SK-N-SH (cell line): ENCODE measurements at regions of chr17 and their contacts with region 1.

Region 1: DNA sequence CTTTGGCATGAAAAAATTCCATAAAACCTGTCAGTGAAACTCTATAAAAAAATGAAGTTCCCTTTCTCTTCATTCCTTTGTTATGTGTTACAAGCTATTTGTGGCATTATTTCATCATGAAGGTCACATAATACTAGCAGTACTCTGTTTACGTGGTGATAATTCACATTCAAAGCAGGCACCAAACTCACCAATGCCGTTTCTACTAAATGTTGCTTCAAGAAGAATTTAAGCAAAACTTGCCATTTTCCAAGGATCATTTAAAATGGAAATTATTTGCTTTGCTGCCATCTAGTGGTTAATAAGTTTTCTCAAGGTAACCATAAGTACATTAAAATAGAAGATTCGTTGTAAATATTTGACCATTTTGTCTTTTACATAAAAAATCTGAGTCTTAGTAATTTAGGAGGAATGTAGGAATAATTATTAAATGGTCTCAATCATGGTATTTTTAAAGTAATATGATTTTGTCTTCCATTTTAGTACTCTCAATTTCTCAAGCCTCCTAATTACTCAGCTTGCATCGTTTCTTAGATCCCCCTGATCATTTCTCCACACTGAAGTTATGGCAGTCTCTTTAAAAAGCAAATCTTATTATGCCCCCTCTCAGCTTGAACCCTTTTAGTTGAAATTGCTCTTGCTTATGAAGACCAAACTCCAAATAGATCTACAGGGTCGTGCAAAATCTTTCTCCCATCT is 80.8 kb downstream of the OMG start:
- DNase-seq: peak; percentile 18
- H3K4me3 ChIP-seq: peak overlapping the region in 1 of 2 experiments; percentile 5; a peak in 1 of 4 replicates
- H3K27ac ChIP-seq: peak overlapping the region; percentile 22 to 52; a peak in 3 of 4 replicates
- H3K4me1 ChIP-seq: peaks cover 0 to 8% of the 10 kb centered on the region in 2 experiments; a peak in 1 of 4 replicates
- H3K27me3 ChIP-seq: no peaks in the 10 kb centered on the region
- CTCF ChIP-seq: peak; percentile 78
- EP300 ChIP-seq: no peak
- RAD21 ChIP-seq: peak; percentile 72

Region 2: DNA sequence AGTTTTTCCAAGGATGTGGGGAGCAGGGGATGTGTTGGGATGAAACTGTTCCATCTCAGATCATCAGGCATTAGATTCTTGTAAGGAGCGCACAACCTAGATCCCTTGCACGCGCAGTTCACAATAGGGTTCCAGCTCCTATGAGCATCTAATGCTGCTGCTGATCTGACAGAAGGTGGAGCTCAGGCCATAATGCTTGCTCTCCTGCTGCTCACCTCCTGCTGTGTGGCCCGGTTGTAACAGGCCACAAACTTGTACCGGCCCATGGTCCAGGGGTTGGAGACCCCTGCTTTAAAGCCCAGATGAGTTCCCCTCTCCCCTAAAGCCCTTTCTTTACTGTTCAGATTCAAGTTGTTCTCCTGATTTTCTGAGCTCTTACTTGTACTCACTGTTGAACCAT is 200.6 kb before region 1 on chr17:
- CTCF ChIA-PET with region 1: interaction called, 45 read pairs
- POLR2A ChIA-PET with region 1: no interaction called
- DNase-seq: no peak
- H3K4me3 ChIP-seq: no peak overlapping the region
- H3K27ac ChIP-seq: no peak overlapping the region
- H3K4me1 ChIP-seq: peaks cover 0 to 10% of the 10 kb centered on the region in 2 experiments; a peak in 1 of 4 replicates
- H3K27me3 ChIP-seq: no peaks in the 10 kb centered on the region
- CTCF ChIP-seq: no peak
- EP300 ChIP-seq: no peak
- RAD21 ChIP-seq: peak; percentile 27; the same call in 1 of the 2 replicates

Region 3: GRCh38 chr17:31195305-31195704 is 20.9 kb before region 1 on chr17:
- CTCF ChIA-PET with region 1: interaction called, 11 read pairs
- POLR2A ChIA-PET with region 1: no interaction called
- DNase-seq: no peak
- H3K4me3 ChIP-seq: no peak overlapping the region
- H3K27ac ChIP-seq: no peak overlapping the region
- H3K4me1 ChIP-seq: no peaks in the 10 kb centered on the region; a peak in 2 of 4 replicates
- H3K27me3 ChIP-seq: no peaks in the 10 kb centered on the region
- CTCF ChIP-seq: no peak
- EP300 ChIP-seq: no peak
- RAD21 ChIP-seq: no peak

Region 4: DNA sequence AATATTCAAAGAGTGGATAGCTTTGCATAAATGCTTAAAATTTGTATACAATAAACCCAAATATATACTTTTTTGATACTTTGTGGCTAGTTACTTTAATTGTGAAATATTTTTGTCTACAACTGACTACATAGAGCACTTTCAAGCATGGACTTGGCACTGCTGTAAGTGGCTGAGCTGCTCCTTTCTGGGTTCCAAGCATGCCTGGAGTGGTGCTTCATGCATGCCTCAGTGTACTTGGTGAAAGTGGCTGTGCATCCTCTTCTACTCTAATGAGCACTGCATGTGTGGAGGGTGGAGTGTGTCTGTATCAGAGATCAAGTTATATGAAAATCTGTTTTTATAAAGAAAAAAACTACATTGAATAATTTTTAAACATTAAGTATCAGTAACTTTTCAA is 13.2 kb before region 1 on chr17:
- CTCF ChIA-PET with region 1: interaction called, 16 read pairs
- POLR2A ChIA-PET with region 1: no interaction called
- DNase-seq: no peak
- H3K4me3 ChIP-seq: no peak overlapping the region
- H3K27ac ChIP-seq: no peak overlapping the region
- H3K4me1 ChIP-seq: no peaks in the 10 kb centered on the region; a peak in 3 of 4 replicates
- H3K27me3 ChIP-seq: no peaks in the 10 kb centered on the region
- CTCF ChIP-seq: no peak
- EP300 ChIP-seq: no peak
- RAD21 ChIP-seq: no peak

Region 5: DNA sequence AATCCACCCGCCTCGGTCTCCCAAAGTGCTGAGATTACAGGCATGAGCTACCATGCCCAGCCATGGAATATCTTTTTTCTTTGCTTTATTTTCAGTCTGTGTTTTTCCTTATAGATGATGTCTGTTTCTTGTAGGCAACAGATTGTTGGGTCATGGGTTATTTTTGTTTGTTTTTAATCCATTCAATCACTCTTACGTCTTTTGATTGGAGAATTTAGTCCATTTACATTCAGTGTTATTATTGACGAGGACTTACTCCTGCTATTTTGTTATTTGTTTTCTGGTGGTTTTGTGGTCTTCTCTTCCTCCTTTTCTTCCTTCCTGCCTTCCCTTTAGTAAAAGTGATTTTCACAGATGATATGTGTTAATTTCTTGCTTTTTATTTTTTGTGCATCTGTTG is 24.9 kb after region 1 on chr17:
- CTCF ChIA-PET with region 1: no interaction called
- POLR2A ChIA-PET with region 1: no interaction called
- DNase-seq: no peak
- H3K4me3 ChIP-seq: no peak overlapping the region
- H3K27ac ChIP-seq: no peak overlapping the region
- H3K4me1 ChIP-seq: no peaks in the 10 kb centered on the region
- H3K27me3 ChIP-seq: no peaks in the 10 kb centered on the region
- CTCF ChIP-seq: no peak
- EP300 ChIP-seq: no peak
- RAD21 ChIP-seq: no peak